Posterior vena cava (tissue), 2 donors: ENCODE measurements at regions of chr10 and their contacts with region 1.

Region 1: DNA sequence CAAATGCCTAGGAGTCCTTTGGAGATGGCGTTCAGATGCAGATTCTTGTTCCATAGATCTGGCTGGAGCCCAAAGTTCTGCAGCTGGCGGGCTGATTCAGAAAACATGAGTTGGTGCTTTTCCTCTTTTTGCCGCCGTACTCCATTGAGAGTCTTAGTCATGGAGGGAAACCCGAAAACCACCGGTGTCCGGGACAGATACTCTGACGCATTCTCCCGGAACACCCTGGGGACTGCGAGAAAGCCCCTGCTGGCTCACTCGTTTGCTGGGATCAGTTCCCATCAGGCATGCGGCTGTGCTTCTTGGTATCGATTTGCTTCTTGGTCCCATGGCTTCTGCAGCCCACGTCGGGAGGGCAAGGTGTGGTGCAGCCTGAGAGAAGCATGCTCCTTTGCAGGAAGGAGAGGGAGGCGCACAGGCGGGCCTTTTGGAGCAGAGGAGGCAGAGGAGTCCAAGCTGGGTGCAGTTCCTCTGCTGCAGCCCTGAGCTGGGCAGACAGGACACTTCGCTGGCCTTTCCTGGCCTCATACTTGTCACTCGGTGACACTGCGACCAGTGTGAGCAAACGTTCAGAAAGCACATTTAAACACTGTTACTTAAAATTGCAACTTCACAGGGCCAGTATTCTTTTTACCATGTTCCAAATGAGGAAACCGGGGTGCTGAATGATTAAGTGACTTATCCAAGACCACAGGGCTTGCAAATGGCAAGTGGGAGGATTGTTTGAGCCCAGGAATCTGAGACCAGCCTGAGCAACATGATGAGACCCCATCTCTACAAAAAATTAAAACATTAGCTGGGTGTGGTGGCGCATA is 30.6 kb upstream of the PFKFB3 start:
- DNase-seq: peak; percentile 91

Region 2: GRCh38 chr10:6185039-6185716 is 13.1 kb after region 1 on chr10:
- intact Hi-C with region 1: loop called in 1 of 2 experiments (anchors 2 kb)
- DNase-seq: no peak